ENCODE measurements at regions of chr9 and their contacts with region 1.

Region 1: DNA sequence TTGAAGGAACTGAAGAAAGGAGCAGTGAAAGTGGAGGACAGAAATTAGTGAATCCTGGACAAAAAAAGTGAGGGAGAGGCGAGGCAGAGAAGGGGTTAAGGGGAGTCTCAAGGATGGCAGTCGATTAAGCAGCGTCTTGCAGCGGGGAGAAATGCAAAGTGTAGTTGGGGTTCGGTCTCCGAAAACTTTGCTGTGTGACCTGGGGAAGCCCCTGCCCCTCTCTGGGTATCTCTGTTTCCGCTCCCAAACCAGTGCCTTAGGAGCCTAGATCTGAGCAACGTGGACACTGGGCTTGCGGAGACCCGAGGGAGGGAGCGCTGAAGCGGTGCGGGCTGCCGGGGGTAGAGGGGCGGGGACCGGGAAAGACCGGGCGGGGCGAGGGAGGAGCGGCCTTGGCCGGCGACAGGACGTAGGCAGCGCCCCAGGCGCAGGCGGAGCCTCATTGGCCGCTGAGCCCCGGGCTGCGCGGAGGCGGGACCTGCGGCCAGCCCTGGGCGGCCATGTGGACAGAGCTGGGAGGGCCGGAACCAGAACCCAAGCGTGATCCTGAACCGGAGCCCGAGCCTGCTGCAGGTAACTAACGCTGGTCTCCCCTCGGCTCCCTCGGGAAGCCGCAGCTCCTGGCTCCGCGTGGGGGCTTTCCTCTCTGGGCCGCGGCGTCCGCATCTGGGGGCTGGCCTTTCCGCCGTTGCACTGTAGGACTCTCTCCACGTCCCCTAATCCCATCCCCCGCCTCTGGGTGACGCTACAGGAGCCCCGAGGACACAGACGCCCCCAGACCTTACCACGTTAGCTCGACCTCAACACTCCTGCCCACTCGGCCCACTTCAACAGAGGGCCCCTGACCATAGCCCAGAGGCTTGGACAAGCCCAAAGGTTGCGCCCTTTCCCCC is at the start of gene ALDH1B1:
- DNase-seq: peak; percentile 85 to 93 (median 89)
- ATAC-seq: peak; percentile 96 to 99 (median 99)
- H3K4me3 ChIP-seq: peak within 1 kb of the TSS; percentile 37 to 87 (median 75)
- H3K27ac ChIP-seq: peak within 1 kb of the TSS in 7 of 12 donors; percentile 19 to 84 (median 54)
- H3K4me1 ChIP-seq: peaks cover 0 to 31% (median 12%) of the 10 kb centered on the region in 12 donors
- H3K27me3 ChIP-seq: no peaks in the 10 kb centered on the region
- CTCF ChIP-seq: peak in 3 of 12 donors; percentile 10 to 32 (median 11)
- POLR2A ChIP-seq: peak in 1 of 2 donors; percentile 33
- total RNA-seq, gene ALDH1B1: 15.3 to 55.6 (median 20.7) TPM

Region 2: DNA sequence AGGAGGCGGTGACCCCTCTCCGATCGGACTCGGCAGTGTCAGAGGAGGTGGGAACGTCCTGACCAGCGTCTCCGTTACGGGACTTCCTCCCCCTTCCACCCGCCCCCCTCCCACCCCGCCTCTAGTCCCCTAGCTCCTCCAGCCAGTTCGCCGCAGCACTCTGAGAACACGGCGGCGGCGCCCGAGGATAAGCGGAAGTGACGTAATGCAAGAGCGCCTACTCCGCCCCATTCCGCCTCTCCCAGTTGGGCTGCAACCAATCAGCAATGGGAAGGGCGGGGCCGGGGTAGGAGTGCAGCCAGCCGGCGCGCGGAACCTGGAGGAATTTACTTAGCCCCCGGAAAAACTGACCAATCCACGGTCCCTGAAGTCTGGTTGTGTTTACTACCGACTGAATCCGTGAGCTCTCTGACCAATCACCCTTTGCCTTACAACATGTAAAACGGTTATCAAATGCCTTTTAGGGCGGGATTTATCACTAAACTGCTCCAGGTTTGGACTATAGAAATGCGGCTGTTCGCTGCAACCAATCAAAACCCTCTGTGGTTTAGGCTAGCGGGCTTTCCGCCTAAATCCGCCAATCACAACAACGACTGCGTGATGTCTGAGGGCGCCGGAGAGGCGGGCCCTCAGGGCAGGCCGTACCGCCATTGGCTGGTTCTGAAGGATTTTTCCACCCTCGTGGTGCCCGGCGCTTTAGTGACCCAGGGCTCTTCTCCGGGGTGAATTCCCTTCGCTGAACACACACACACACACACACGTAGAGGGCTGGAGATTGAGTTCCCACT is 927.0 kb before region 1 on chr9 and contains the start of gene ZBTB5:
- intact Hi-C with region 1: loop called in 1 of 10 experiments (anchors 5 kb)
- DNase-seq: peak; percentile 99 to 100 (median 99)
- ATAC-seq: peak; percentile 89 to 93 (median 92)
- H3K4me3 ChIP-seq: peak within 1 kb of the TSS; percentile 68 to 99 (median 92)
- H3K27ac ChIP-seq: peak within 1 kb of the TSS; percentile 86 to 99 (median 97)
- H3K4me1 ChIP-seq: peaks cover 0 to 40% (median 25%) of the 10 kb centered on the region in 12 donors
- H3K27me3 ChIP-seq: no peaks in the 10 kb centered on the region
- CTCF ChIP-seq: no peak
- POLR2A ChIP-seq: peak in 1 of 2 donors; percentile 92
- total RNA-seq, gene ZBTB5: 5.2 to 8.0 (median 6.3) TPM

Region 3: GRCh38 chr9:37903647-37904444 is 488.6 kb before region 1 on chr9 and contains the start of gene SLC25A51:
- intact Hi-C with region 1: loop called in 2 of 10 experiments (anchors 10 kb)
- DNase-seq: peak; percentile 93 to 97 (median 95)
- ATAC-seq: peak; percentile 83 to 94 (median 94)
- H3K4me3 ChIP-seq: peak within 1 kb of the TSS; percentile 71 to 99 (median 93)
- H3K27ac ChIP-seq: peak within 1 kb of the TSS; percentile 43 to 96 (median 88)
- H3K4me1 ChIP-seq: peaks cover 0 to 29% (median 21%) of the 10 kb centered on the region in 12 donors
- H3K27me3 ChIP-seq: no peaks in the 10 kb centered on the region
- CTCF ChIP-seq: peak; percentile 83 to 97 (median 92)
- POLR2A ChIP-seq: peak in 1 of 2 donors; percentile 71
- total RNA-seq, gene SLC25A51: 18.9 to 27.6 (median 22.9) TPM

Region 4: DNA sequence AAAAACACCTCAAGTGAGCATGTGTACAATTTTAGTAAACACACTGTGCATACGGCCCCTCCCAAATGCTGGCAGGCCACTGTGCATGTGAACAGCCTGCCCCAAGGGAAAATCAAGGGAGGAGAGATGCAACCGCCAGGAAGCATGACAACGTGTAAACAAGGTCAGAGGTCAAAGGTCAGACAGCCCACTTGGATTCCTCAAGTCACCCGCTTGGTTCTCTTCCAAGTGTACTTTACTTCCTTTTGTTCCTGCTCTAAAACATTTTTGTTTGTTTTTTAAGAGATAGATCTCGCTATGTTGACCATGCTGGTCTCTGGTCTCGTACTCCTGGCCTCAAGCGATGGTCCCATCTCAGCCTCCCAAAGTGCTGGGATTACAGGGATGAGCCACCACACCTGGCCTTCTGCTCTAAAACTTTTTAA is 196.7 kb before region 1 on chr9:
- intact Hi-C with region 1: no loop called
- DNase-seq: no peak
- ATAC-seq: no peak
- H3K4me3 ChIP-seq: no peak overlapping the region
- H3K27ac ChIP-seq: no peak overlapping the region
- H3K4me1 ChIP-seq: peaks cover 0 to 4% (median 0%) of the 10 kb centered on the region in 12 donors
- H3K27me3 ChIP-seq: peaks cover 0 to 6% (median 0%) of the 10 kb centered on the region in 9 donors
- CTCF ChIP-seq: no peak
- POLR2A ChIP-seq: no peak

Region 5: DNA sequence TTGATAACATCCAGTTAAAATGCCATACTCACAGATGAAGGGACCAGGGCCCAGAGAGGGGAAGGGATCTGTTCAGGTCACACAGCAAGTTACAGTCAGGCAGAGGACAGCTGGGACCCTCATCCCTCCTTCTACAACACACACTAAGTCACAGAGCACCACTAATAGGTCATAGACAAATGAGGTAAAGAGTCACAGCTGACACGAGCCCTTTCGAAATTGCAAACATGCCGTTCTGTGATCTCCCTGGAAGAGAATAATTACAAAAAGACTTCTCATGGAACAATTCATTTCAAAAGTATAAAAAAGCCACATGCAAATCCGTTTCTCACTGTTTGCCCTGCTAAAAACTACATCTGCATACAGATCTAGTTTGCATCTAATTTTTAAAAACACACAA is 16.2 kb after region 1 on chr9:
- intact Hi-C with region 1: loop called in 1 of 10 experiments (anchors 2 kb)
- DNase-seq: no peak
- ATAC-seq: no peak
- H3K4me3 ChIP-seq: no peak overlapping the region
- H3K27ac ChIP-seq: no peak overlapping the region
- H3K4me1 ChIP-seq: no peaks in the 10 kb centered on the region
- H3K27me3 ChIP-seq: peaks cover 0 to 51% (median 10%) of the 10 kb centered on the region in 9 donors
- CTCF ChIP-seq: no peak
- POLR2A ChIP-seq: no peak

Region 6: DNA sequence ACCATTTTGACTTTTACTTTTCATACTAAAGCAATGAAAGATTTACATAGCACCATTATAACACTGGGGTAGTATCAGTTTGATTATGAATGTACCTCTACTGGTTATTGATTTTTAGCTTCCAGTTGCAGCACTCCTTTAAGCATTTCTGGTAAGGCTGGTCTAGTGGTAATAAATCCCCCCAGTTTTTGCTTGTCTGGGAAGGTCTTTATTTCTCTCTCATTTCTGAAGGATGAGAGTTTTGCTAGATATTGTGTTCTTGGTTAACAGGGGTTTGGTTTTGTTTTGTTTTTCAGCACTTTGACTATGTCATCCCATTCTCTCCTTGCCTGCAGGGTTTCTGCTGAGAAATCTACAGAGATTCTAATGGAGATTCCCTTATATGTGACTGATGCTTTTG is 58.7 kb after region 1 on chr9:
- intact Hi-C with region 1: loop called in 1 of 10 experiments (anchors 10 kb)
- DNase-seq: no peak
- ATAC-seq: no peak
- H3K4me3 ChIP-seq: no peak overlapping the region
- H3K27ac ChIP-seq: no peak overlapping the region
- H3K4me1 ChIP-seq: no peaks in the 10 kb centered on the region
- H3K27me3 ChIP-seq: peaks cover 0 to 12% (median 0%) of the 10 kb centered on the region in 9 donors
- CTCF ChIP-seq: no peak
- POLR2A ChIP-seq: no peak